ENCODE measurements at regions of chr6 and their contacts with region 1.

Region 1: GRCh38 chr6:121515630-121516265 is 80.3 kb downstream of the GJA1 start:
- DNase-seq: peak; percentile 93
- H3K4me3 ChIP-seq: no peak overlapping the region
- H3K27ac ChIP-seq: peak overlapping the region; percentile 90
- H3K4me1 ChIP-seq: peaks cover 46% of the 10 kb centered on the region
- H3K27me3 ChIP-seq: no peaks in the 10 kb centered on the region
- CTCF ChIP-seq: no peak
- POLR2A ChIP-seq: peak; percentile 36

Region 2: DNA sequence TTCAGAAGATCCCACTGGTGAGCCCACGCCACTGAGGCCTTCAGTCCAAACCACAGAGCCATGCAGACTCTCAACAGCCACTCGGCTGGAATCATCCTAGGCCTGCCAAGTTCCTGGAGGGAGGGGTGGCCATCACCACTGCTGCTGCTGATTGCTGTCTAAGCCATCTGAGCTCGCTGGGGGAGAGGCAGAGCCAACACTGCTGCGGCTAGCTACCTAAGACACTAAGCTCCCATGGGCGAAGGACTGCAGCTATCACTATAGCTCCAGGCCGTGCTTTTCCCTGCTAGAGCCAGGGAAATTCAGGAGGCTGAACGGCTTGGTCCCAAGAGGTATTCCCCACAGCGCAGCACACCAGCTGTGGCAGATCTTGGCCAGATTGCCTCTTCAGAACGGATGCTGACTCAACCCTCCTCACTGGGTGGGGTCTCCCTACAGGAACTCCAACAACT is 255.1 kb before region 1 on chr6:
- CTCF ChIA-PET with region 1: no interaction called
- POLR2A ChIA-PET with region 1: no interaction called
- dilution Hi-C with region 1: no loop called
- intact Hi-C with region 1: no loop called
- DNase-seq: peak; percentile 26
- H3K4me3 ChIP-seq: no peak overlapping the region
- H3K27ac ChIP-seq: no peak overlapping the region
- H3K4me1 ChIP-seq: no peaks in the 10 kb centered on the region
- H3K27me3 ChIP-seq: no peaks in the 10 kb centered on the region
- CTCF ChIP-seq: no peak
- POLR2A ChIP-seq: no peak

Region 3: DNA sequence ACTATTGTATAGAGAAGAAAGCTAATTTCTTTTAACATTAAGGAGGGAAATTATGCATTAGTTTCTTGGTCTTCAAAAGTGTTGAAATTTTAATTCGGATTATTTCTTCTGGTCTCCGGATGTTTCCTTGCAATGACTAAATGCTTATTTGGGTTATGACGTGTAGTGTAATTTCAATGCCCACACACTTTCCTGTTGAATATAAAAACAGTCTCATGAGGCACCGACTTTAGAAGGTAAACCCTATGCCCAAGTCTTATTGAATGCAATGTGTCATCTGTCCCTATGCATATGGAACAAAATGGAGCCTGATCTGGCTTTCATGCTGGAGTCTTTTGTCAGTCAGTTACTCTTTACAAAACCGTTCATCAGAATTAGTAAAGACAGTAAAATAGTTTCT is 62.6 kb before region 1 on chr6:
- CTCF ChIA-PET with region 1: no interaction called
- POLR2A ChIA-PET with region 1: no interaction called
- dilution Hi-C with region 1: no loop called
- intact Hi-C with region 1: loop called (anchors 2 kb)
- DNase-seq: peak; percentile 72
- H3K4me3 ChIP-seq: no peak overlapping the region
- H3K27ac ChIP-seq: no peak overlapping the region
- H3K4me1 ChIP-seq: peaks cover 9% of the 10 kb centered on the region
- H3K27me3 ChIP-seq: no peaks in the 10 kb centered on the region
- CTCF ChIP-seq: no peak
- POLR2A ChIP-seq: no peak

Region 4: GRCh38 chr6:121482004-121482693 is 33.6 kb before region 1 on chr6:
- CTCF ChIA-PET with region 1: interaction called, 3 read pairs
- POLR2A ChIA-PET with region 1: interaction called, 3 read pairs
- dilution Hi-C with region 1: no loop called
- intact Hi-C with region 1: loop called (anchors 1 kb)
- DNase-seq: peak; percentile 89
- H3K4me3 ChIP-seq: no peak overlapping the region
- H3K27ac ChIP-seq: peak overlapping the region; percentile 72
- H3K4me1 ChIP-seq: peaks cover 9% of the 10 kb centered on the region
- H3K27me3 ChIP-seq: no peaks in the 10 kb centered on the region
- CTCF ChIP-seq: no peak
- POLR2A ChIP-seq: no peak